ENCODE measurements at regions of chr2 and their contacts with region 1.

Region 1: GRCh38 chr2:218852911-218853667 is 6.5 kb upstream of the WNT6 start:
- DNase-seq: peak; percentile 55
- H3K4me3 ChIP-seq: no peak overlapping the region
- H3K27ac ChIP-seq: no peak overlapping the region
- H3K4me1 ChIP-seq: no peaks in the 10 kb centered on the region
- H3K27me3 ChIP-seq: peaks cover 46 to 48% of the 10 kb centered on the region in 2 experiments
- CTCF ChIP-seq: peak; percentile 66 to 82
- POLR2A ChIP-seq: no peak

Region 2: DNA sequence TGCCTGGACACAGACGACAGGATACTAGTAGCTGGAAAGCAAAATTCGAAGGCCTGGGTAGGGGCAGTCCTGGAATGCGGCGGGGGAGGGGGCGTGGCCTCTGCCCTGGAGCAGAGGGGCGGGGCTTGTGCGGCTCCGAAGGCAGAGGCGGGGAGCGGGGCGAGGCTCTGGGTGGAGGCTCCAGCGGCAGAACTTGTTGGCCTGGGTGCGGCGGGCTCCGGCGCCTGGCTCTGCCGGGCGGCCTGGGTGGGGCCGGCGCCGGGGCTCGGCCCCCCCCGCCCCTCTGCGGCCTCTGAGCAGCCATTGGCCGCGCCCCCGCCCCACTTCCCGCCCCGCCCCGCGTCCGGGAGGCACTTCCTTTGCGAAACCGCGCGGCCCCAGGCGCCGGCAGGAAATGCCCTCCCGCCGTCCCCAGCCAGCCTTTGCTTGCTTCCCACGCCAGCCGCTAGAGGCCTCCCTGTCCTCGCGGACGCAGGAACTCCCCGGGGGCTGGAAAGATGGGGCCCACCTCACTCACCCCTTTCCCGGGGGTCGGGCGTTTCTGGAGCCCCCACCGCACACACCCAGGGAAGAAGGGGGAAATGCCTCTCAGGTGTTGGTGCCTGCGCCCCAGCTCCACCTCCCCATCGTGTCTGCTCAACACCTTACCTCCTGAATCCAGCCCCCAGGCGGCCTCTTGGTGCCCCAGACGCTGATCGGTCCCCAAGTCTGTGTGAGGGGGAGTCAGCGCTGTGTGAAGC is 446.7 kb before region 1 on chr2:
- CTCF ChIA-PET with region 1: no interaction called
- POLR2A ChIA-PET with region 1: no interaction called
- dilution Hi-C with region 1: no loop called
- intact Hi-C with region 1: loop called (anchors 5 kb)
- DNase-seq: peak; percentile 94
- H3K4me3 ChIP-seq: peak overlapping the region; percentile 16 to 25 (median 18)
- H3K27ac ChIP-seq: peak overlapping the region; percentile 81
- H3K4me1 ChIP-seq: peaks cover 22% of the 10 kb centered on the region
- H3K27me3 ChIP-seq: no peaks in the 10 kb centered on the region
- CTCF ChIP-seq: peak; percentile 66 to 91
- POLR2A ChIP-seq: peak; percentile 80

Region 3: DNA sequence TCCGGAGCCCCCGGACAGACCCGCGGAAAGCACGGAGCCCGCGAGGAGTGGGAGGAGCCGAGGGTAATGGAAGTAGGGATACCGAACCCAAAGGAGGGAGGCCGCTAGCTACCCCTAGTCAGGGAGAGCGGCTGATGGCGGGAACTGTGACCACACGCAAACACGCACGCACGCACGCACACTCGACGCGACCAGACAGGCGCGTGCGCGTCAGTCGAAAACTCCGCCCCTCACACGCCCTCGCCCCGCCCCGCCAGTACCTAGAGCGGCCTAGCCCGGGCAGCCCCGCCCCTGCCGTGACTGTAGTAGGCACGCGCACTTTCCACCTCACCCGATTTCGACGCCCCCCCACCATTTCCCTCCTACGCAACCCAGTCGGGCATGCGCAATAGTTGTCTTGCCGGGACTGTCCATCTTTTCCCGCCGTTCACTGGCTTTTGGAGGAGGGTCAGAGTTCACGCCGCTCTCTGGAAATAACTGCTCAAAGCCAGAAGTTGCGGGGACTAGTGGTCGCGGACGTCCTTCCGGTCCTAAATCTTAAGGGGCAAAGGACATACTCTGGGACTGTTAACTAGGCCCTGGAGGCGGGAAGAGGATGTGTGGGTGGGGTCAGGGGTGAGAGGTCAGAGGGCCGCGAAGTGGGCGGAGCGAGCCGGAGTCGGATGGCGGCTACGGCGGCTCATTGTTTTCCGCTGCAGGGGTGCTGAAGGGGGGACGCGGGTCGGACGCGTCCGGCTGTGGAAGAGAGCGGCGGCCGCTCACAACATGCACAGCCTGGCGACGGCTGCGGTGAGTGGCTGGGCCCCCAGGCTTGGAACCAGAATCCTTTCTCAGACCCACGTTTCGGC is 284.7 kb before region 1 on chr2 and contains the starts of genes CNOT9 and USP37:
- CTCF ChIA-PET with region 1: no interaction called
- POLR2A ChIA-PET with region 1: no interaction called
- dilution Hi-C with region 1: no loop called
- intact Hi-C with region 1: no loop called
- DNase-seq: peak; percentile 99
- H3K4me3 ChIP-seq: peak within 1 kb of the TSS; percentile 58 to 81 (median 71)
- H3K27ac ChIP-seq: peak within 1 kb of the TSS; percentile 94
- H3K4me1 ChIP-seq: peaks cover 17% of the 10 kb centered on the region
- H3K27me3 ChIP-seq: no peaks in the 10 kb centered on the region
- CTCF ChIP-seq: no peak
- POLR2A ChIP-seq: peak; percentile 81
- total RNA-seq, gene CNOT9: 63.2 and 68.9 TPM in 2 replicates
- total RNA-seq, gene USP37: 13.1 and 14.4 TPM in 2 replicates

Region 4: GRCh38 chr2:218680061-218680460 is 173.0 kb before region 1 on chr2:
- CTCF ChIA-PET with region 1: interaction called, 33 read pairs
- POLR2A ChIA-PET with region 1: no interaction called
- dilution Hi-C with region 1: no loop called
- intact Hi-C with region 1: no loop called
- DNase-seq: no peak
- H3K4me3 ChIP-seq: no peak overlapping the region
- H3K27ac ChIP-seq: no peak overlapping the region
- H3K4me1 ChIP-seq: peaks cover 6% of the 10 kb centered on the region
- H3K27me3 ChIP-seq: no peaks in the 10 kb centered on the region
- CTCF ChIP-seq: no peak
- POLR2A ChIP-seq: no peak

Region 5: DNA sequence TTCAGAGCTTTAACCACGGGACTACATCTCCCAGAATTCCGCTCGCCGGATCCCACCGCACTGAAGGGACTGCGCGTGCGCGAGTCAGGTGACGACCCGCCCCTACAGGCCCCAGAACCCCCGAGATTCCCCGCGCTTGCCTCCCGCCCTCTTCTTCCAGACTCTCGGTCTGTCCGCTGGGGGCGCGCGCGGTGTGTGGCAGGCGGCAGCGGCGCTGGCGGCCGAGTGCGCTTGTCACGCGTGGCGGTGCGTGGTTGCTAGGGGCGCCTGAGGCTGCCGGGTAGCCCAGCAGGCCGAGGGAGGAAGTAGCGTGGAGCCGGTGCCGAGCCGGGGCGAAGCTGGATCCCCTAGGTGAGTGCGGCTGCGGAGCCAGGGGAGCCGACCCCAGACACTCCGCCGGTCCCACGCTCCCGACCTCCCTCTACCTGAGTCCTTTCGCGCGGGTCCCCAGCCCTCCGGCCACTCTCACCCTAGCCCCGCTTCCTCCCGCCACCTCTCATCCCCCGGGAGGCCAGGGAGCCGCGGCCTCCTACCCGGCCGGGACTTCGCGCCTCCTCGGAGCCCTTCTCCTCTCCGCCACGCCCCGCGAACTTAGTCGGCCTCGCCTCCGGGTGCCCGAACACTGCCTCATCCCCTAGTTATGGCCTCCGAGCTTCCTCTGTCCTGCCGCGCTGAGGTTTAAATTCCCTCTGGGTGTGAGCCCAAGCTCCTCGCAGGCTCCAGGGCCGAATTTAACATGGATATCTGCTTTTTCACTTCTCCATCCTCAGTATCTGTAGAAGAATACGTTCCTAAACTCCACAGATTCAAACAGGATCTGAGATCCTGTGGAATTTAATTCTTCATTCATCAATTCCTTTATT is 142.2 kb before region 1 on chr2 and contains the start of gene TTLL4:
- CTCF ChIA-PET with region 1: interaction called, 45 read pairs
- POLR2A ChIA-PET with region 1: no interaction called
- dilution Hi-C with region 1: no loop called
- intact Hi-C with region 1: no loop called
- DNase-seq: peak; percentile 95
- H3K4me3 ChIP-seq: peak within 1 kb of the TSS; percentile 89 to 98 (median 93)
- H3K27ac ChIP-seq: peak within 1 kb of the TSS; percentile 60
- H3K4me1 ChIP-seq: peaks cover 14% of the 10 kb centered on the region
- H3K27me3 ChIP-seq: no peaks in the 10 kb centered on the region
- CTCF ChIP-seq: peak; percentile 81 to 82
- POLR2A ChIP-seq: peak; percentile 84
- total RNA-seq, gene TTLL4: 41.0 and 45.0 TPM in 2 replicates

Region 6: DNA sequence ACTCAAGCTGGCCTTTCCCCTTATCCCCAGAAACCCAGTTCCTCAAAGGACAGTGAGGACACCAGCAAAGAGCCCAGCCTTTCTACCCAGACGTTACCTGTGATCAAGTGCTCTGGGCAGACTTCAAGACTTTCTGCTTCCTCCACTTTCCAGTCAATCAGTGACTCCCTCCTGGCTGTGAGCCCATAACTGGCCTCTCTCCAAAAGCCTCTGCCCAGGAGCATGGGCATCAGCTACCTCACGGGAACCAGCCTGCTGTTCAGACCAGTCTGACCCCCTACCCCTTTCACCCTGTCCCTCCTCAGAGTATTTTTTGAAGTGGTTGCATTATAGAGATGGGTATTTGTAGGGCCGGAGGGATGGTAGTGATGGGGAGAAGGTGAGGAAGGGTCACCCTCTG is 98.9 kb before region 1 on chr2:
- CTCF ChIA-PET with region 1: interaction called, 81 read pairs
- POLR2A ChIA-PET with region 1: no interaction called
- dilution Hi-C with region 1: no loop called
- intact Hi-C with region 1: no loop called
- DNase-seq: no peak
- H3K4me3 ChIP-seq: no peak overlapping the region
- H3K27ac ChIP-seq: no peak overlapping the region
- H3K4me1 ChIP-seq: no peaks in the 10 kb centered on the region
- H3K27me3 ChIP-seq: no peaks in the 10 kb centered on the region
- CTCF ChIP-seq: no peak
- POLR2A ChIP-seq: no peak

Region 7: DNA sequence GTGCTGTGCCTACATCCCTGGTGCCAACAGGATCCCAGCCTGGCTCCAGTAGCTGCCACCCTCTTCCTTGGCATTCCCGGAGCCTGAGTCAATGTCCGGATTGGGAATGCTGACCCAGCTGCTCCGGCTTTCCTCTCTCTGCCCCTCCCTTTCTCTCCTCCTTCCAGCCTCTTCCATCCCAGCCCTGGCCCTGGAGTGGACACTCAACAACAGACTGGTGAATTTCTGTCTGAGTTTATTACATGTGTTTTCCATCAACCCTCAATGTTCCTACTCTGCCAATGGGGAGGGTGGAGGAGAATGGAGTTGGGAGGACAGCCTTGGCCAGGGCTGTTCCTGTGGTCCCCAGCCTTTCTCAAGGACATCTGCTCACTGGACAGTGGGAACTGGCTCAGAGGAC is 20.6 kb before region 1 on chr2:
- CTCF ChIA-PET with region 1: interaction called, 44 read pairs
- POLR2A ChIA-PET with region 1: no interaction called
- dilution Hi-C with region 1: no loop called
- intact Hi-C with region 1: no loop called
- DNase-seq: peak; percentile 71
- H3K4me3 ChIP-seq: no peak overlapping the region
- H3K27ac ChIP-seq: peak overlapping the region; percentile 65
- H3K4me1 ChIP-seq: peaks cover 17% of the 10 kb centered on the region
- H3K27me3 ChIP-seq: peaks cover 0 to 2% of the 10 kb centered on the region in 2 experiments
- CTCF ChIP-seq: no peak
- POLR2A ChIP-seq: no peak

Region 8: DNA sequence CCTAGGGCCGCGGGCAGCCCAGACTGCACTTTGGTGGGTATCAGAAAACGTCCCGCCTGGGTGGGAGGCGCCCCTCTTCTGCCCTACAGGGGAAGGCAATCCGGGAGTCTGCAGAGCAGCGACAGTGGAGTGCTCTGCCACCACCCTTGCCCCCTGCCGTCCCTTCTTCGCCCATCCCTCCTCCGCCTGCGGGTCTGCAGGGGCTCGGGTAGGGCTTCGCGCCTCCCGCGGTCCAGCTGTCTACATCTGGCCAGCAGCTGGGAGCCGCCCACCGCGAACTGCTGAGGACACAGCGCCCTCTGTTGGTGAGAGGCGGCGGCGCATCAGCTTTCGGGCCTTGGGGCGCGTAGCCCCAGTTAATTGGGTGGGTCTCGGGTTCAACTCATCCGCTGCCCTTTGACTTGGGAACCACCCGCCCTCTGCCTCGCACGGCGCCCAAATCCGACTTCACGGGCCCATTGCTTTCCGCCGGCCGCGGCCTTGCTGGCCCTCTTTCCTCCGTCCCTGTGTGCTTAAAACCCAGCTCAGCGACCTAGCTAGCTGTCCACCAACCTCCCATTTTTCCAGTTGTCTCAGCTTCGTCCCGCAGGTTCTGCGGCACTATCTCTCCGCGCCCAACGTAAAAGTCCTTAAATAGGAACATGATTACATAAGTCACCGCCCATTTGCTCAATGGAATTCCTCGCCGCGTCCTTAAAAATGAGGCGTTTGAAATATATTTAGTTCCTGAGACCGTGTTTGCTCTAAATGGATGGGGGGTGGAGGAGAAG is 45.2 kb after region 1 on chr2:
- CTCF ChIA-PET with region 1: interaction called, 49 read pairs
- POLR2A ChIA-PET with region 1: no interaction called
- dilution Hi-C with region 1: no loop called
- intact Hi-C with region 1: loop called (anchors 1 kb)
- DNase-seq: peak; percentile 35
- H3K4me3 ChIP-seq: no peak overlapping the region
- H3K27ac ChIP-seq: no peak overlapping the region
- H3K4me1 ChIP-seq: no peaks in the 10 kb centered on the region
- H3K27me3 ChIP-seq: peaks cover 66 to 77% of the 10 kb centered on the region in 2 experiments
- CTCF ChIP-seq: peak; percentile 93 to 98
- POLR2A ChIP-seq: no peak